Naive thymus-derived CD4-positive, alpha-beta T cell (primary cell): ENCODE measurements at regions of chr18 and their contacts with region 1.

Region 1: GRCh38 chr18:10525371-10526210 is at the start of gene NAPG:
- DNase-seq: peak; percentile 88 to 94 (median 91)
- ATAC-seq: peak; percentile 94
- H3K4me3 ChIP-seq: peak within 1 kb of the TSS; percentile 93
- H3K4me3 Mint-ChIP-seq: peak within 1 kb of the TSS; percentile 94 to 99 (median 98)
- H3K27ac ChIP-seq: peak within 1 kb of the TSS; percentile 76
- H3K27ac Mint-ChIP-seq: peak within 1 kb of the TSS; percentile 84 to 99 (median 96)
- H3K4me1 ChIP-seq: peaks cover 4 to 22% of the 10 kb centered on the region in 2 donors
- H3K4me1 Mint-ChIP-seq: peaks cover 43 to 62% (median 53%) of the 10 kb centered on the region in 7 donors
- H3K27me3 ChIP-seq: no peaks in the 10 kb centered on the region
- H3K27me3 Mint-ChIP-seq: peaks cover 0 to 10% (median 0%) of the 10 kb centered on the region in 5 donors
- total RNA-seq, gene NAPG: 28.1 to 35.7 (median 30.0) TPM

Region 2: GRCh38 chr18:9334329-9334972 is 1191.1 kb before region 1 on chr18 and contains the start of gene TWSG1:
- CTCF ChIA-PET with region 1: no interaction called
- POLR2A ChIA-PET with region 1: no interaction called
- intact Hi-C with region 1: loop called (anchors 5 to 10 kb)
- DNase-seq: peak; percentile 86 to 94 (median 90)
- ATAC-seq: peak; percentile 94
- H3K4me3 ChIP-seq: peak within 1 kb of the TSS; percentile 90
- H3K4me3 Mint-ChIP-seq: peak within 1 kb of the TSS; percentile 86 to 94 (median 92)
- H3K27ac ChIP-seq: peak within 1 kb of the TSS; percentile 74
- H3K27ac Mint-ChIP-seq: peak within 1 kb of the TSS; percentile 63 to 97 (median 88)
- H3K4me1 ChIP-seq: peaks cover 0 to 8% of the 10 kb centered on the region in 2 donors
- H3K4me1 Mint-ChIP-seq: peaks cover 1 to 33% (median 24%) of the 10 kb centered on the region in 7 donors
- H3K27me3 ChIP-seq: no peaks in the 10 kb centered on the region
- H3K27me3 Mint-ChIP-seq: peaks cover 0 to 35% (median 0%) of the 10 kb centered on the region in 5 donors
- total RNA-seq, gene TWSG1: 2.4 to 7.6 (median 5.8) TPM

Region 3: DNA sequence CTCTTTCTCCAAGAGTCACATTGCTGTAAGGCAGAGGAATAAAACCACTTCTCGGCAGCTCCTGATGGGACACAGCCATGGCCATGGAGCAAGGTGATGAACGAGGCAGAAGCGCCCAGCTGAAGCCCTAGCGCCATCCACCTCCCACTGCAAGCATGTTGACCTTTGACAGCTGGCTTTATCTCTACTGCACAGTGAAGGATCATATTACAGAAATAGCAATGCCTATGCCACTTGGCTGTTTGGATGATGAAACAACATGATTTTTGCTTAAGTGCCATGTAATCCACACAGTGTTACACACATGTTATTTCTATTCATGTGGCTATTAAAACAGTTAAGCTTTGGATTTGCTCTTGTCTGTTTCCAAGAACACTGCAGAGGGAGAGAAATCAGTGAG is 444.1 kb before region 1 on chr18:
- CTCF ChIA-PET with region 1: no interaction called
- POLR2A ChIA-PET with region 1: no interaction called
- intact Hi-C with region 1: no loop called
- DNase-seq: no peak
- ATAC-seq: no peak
- H3K4me3 ChIP-seq: no peak overlapping the region
- H3K4me3 Mint-ChIP-seq: no peak overlapping the region
- H3K27ac ChIP-seq: no peak overlapping the region
- H3K27ac Mint-ChIP-seq: no peak overlapping the region
- H3K4me1 ChIP-seq: no peaks in the 10 kb centered on the region
- H3K4me1 Mint-ChIP-seq: no peaks in the 10 kb centered on the region
- H3K27me3 ChIP-seq: no peaks in the 10 kb centered on the region
- H3K27me3 Mint-ChIP-seq: peaks cover 0 to 11% (median 0%) of the 10 kb centered on the region in 5 donors

Region 4: DNA sequence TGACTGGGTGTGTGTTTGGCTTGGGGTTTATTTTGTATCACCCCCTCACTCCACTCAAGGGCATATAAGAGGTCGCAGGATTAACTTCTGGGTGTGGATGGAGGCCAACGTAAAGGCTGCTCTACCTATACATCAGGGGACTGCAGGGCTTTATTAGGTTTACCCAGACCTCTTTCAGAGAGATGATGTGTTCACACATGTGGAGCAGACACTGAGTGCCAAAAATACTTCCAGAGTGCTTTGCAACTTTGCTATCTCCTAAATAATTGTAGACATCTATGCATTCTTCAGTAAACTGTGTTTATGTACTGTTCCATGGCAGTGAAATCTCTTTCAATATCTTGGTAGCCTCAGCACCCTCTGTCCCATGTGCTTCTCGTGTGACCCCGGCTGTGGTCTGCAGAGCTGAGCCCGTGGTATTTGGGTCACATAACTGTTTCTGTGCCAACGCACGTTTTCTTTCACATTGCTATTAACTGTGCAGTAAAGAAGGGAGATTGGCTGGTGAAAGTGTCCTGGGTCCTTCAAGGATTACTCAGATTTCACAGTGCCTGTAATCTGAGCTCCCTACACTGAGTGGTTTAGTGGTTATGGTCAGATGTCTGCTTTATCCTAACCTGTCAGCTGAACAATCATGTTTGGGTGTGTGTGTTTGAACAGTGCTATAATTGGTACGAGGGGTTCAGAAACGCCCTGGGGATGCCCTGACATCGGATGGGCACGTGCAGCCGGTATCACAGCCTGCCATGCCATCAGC is 403.6 kb before region 1 on chr18:
- CTCF ChIA-PET with region 1: no interaction called
- POLR2A ChIA-PET with region 1: no interaction called
- intact Hi-C with region 1: loop called in 1 of 2 experiments (anchors 10 kb)
- DNase-seq: no peak
- ATAC-seq: no peak
- H3K4me3 ChIP-seq: no peak overlapping the region
- H3K4me3 Mint-ChIP-seq: no peak overlapping the region
- H3K27ac ChIP-seq: no peak overlapping the region
- H3K27ac Mint-ChIP-seq: no peak overlapping the region
- H3K4me1 ChIP-seq: no peaks in the 10 kb centered on the region
- H3K4me1 Mint-ChIP-seq: peaks cover 0 to 23% (median 0%) of the 10 kb centered on the region in 7 donors
- H3K27me3 ChIP-seq: no peaks in the 10 kb centered on the region
- H3K27me3 Mint-ChIP-seq: peaks cover 0 to 11% (median 4%) of the 10 kb centered on the region in 5 donors

Region 5: DNA sequence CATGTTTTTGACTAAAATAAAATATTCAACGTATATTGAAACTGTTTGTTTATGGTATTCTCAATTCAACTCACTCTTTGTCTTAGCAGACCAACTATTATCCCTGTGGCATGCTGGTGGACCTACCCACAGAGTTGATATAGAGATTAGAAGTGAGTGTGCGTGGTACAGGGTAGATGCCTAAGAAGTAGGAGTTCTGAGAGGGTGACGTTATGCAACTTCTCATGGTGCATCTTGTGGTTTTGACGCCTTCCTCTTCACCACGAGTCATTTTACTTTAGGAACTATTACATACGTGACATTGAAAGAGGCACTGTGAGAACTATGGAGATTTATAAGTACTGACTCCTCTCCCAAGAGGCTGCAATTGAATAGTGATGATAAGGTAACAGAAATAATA is 26.4 kb before region 1 on chr18:
- CTCF ChIA-PET with region 1: no interaction called
- POLR2A ChIA-PET with region 1: no interaction called
- intact Hi-C with region 1: no loop called
- DNase-seq: peak in 1 of 9 donors; percentile 12
- ATAC-seq: peak; percentile 68
- H3K4me3 ChIP-seq: no peak overlapping the region
- H3K4me3 Mint-ChIP-seq: no peak overlapping the region
- H3K27ac ChIP-seq: no peak overlapping the region
- H3K27ac Mint-ChIP-seq: no peak overlapping the region
- H3K4me1 ChIP-seq: no peaks in the 10 kb centered on the region
- H3K4me1 Mint-ChIP-seq: peaks cover 0 to 8% (median 7%) of the 10 kb centered on the region in 7 donors
- H3K27me3 ChIP-seq: no peaks in the 10 kb centered on the region
- H3K27me3 Mint-ChIP-seq: peaks cover 8 to 27% (median 20%) of the 10 kb centered on the region in 5 donors

Region 6: DNA sequence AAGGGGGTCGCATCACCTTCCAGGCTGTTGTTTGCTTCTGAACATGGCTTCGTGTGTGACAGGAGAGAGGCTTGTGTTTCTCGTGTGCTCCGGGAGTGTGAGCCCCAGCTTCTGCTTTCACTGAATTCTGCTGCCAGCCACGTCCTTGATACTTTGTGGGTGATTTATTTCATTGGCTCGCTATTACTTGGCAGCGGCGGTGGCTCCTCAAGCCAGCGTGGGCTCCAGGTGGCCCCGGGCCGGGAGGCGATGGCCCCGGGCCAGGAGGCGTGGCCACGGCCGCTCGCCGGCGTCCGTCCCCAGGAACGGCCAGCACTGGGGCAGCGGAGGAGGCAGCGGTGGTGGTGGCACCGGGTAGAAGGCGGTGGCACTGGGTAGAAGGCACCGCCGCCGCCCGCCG is 63.4 kb after region 1 on chr18:
- CTCF ChIA-PET with region 1: no interaction called
- POLR2A ChIA-PET with region 1: no interaction called
- intact Hi-C with region 1: no loop called
- DNase-seq: no peak
- ATAC-seq: no peak
- H3K4me3 ChIP-seq: no peak overlapping the region
- H3K4me3 Mint-ChIP-seq: no peak overlapping the region
- H3K27ac ChIP-seq: no peak overlapping the region
- H3K27ac Mint-ChIP-seq: no peak overlapping the region
- H3K4me1 ChIP-seq: no peaks in the 10 kb centered on the region
- H3K4me1 Mint-ChIP-seq: peaks cover 0 to 13% (median 0%) of the 10 kb centered on the region in 7 donors
- H3K27me3 ChIP-seq: no peaks in the 10 kb centered on the region
- H3K27me3 Mint-ChIP-seq: peaks cover 0 to 13% (median 4%) of the 10 kb centered on the region in 5 donors

Region 7: GRCh38 chr18:10726198-10726965 is 200.8 kb after region 1 on chr18:
- CTCF ChIA-PET with region 1: no interaction called
- POLR2A ChIA-PET with region 1: no interaction called
- intact Hi-C with region 1: no loop called
- DNase-seq: no peak
- ATAC-seq: peak; percentile 10
- H3K4me3 ChIP-seq: no peak overlapping the region
- H3K4me3 Mint-ChIP-seq: peak overlapping the region in 1 of 10 donors; percentile 30
- H3K27ac ChIP-seq: no peak overlapping the region
- H3K27ac Mint-ChIP-seq: no peak overlapping the region
- H3K4me1 ChIP-seq: no peaks in the 10 kb centered on the region
- H3K4me1 Mint-ChIP-seq: no peaks in the 10 kb centered on the region
- H3K27me3 ChIP-seq: no peaks in the 10 kb centered on the region
- H3K27me3 Mint-ChIP-seq: peaks cover 2 to 42% (median 17%) of the 10 kb centered on the region in 5 donors

Region 8: GRCh38 chr18:11908182-11909060 is 1382.8 kb after region 1 on chr18 and contains the start of gene MPPE1:
- CTCF ChIA-PET with region 1: no interaction called
- POLR2A ChIA-PET with region 1: no interaction called
- intact Hi-C with region 1: loop called in 1 of 2 experiments (anchors 2 kb)
- DNase-seq: peak; percentile 77 to 88 (median 83)
- ATAC-seq: peak; percentile 95
- H3K4me3 ChIP-seq: peak within 1 kb of the TSS; percentile 94
- H3K4me3 Mint-ChIP-seq: peak within 1 kb of the TSS; percentile 90 to 97 (median 96)
- H3K27ac ChIP-seq: peak within 1 kb of the TSS; percentile 97
- H3K27ac Mint-ChIP-seq: peak within 1 kb of the TSS; percentile 93 to 97 (median 95)
- H3K4me1 ChIP-seq: peaks cover 8 to 9% of the 10 kb centered on the region in 2 donors
- H3K4me1 Mint-ChIP-seq: peaks cover 10 to 32% (median 24%) of the 10 kb centered on the region in 7 donors
- H3K27me3 ChIP-seq: no peaks in the 10 kb centered on the region
- H3K27me3 Mint-ChIP-seq: no peaks in the 10 kb centered on the region
- total RNA-seq, gene MPPE1: 61.9 to 88.0 (median 86.2) TPM